IMR-90 (cell line): ENCODE measurements at regions of chrX and their contacts with region 1.

Region 1: DNA sequence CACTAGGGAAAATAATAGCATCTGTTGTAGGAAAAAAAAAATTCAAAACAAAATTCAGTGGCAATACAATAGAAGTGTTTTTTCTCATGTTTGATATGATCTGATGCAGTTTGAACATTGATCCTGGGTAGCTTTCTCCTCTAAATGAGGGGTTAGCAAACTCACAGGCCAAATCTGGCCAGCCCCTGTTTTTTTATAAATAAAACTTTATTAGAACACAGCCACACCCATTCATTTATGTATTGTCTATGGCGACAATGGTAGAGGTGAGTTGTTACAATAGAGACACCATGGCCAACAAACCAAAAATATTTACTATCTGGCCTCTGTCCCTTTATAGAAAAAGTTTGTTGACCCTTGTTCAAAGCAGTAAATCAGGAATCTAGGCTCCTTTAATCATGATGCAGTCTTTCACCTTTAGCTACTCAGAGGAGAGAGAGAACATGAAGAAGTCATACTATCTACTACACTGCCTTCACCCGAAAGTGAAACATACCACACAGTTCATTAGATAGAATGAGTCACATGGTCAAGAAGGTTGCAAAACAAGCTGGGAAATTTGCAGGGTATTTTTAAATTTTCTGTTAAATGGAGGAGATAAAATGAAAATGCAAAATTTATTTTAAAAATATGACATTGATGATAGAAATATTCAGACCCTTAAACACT is 186.6 kb upstream of the MAOA start:
- DNase-seq: no peak
- ATAC-seq: no peak
- H3K4me3 ChIP-seq: no peak overlapping the region
- H3K27ac ChIP-seq: no peak overlapping the region
- H3K4me1 ChIP-seq: no peaks in the 10 kb centered on the region
- H3K27me3 ChIP-seq: no peaks in the 10 kb centered on the region
- CTCF ChIP-seq: no peak
- POLR2A ChIP-seq: no peak
- RAD21 ChIP-seq: no peak

Region 2: DNA sequence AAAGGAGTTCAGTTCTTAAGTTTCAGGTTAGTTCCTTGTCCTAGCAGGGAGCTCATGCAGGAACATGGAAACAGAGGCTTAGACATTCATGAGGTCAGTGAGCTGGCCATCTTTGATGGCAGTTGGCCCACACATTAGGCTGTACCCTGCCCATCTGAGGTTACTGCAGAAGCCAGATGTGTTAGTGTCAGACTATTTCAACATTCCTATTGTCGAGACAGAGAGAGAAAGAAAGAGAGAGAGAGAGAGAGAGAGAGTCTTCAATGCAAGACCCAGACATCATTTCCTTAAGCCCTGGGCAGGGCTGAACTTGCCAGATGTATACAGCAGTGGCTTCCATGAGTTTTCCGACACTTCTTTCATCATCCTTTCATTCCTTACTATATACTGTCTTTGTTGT is 782.8 kb before region 1 on chrX:
- CTCF ChIA-PET with region 1: no interaction called
- POLR2A ChIA-PET with region 1: no interaction called
- dilution Hi-C with region 1: no loop called
- in situ Hi-C with region 1: no loop called
- intact Hi-C with region 1: no loop called
- DNase-seq: no peak
- ATAC-seq: no peak
- H3K4me3 ChIP-seq: no peak overlapping the region
- H3K27ac ChIP-seq: no peak overlapping the region
- H3K4me1 ChIP-seq: no peaks in the 10 kb centered on the region
- H3K27me3 ChIP-seq: peaks cover 3% of the 10 kb centered on the region
- CTCF ChIP-seq: no peak
- POLR2A ChIP-seq: no peak
- RAD21 ChIP-seq: no peak

Region 3: GRCh38 chrX:43423876-43424275 is 45.6 kb before region 1 on chrX:
- CTCF ChIA-PET with region 1: no interaction called
- POLR2A ChIA-PET with region 1: no interaction called
- dilution Hi-C with region 1: no loop called
- in situ Hi-C with region 1: no loop called
- intact Hi-C with region 1: loop called (anchors 2 kb)
- DNase-seq: no peak
- ATAC-seq: no peak
- H3K4me3 ChIP-seq: no peak overlapping the region
- H3K27ac ChIP-seq: no peak overlapping the region
- H3K4me1 ChIP-seq: no peaks in the 10 kb centered on the region
- H3K27me3 ChIP-seq: no peaks in the 10 kb centered on the region
- CTCF ChIP-seq: no peak
- POLR2A ChIP-seq: no peak
- RAD21 ChIP-seq: no peak